B cell (primary cell): ENCODE measurements at regions of chr13 and their contacts with region 1.

Region 1: DNA sequence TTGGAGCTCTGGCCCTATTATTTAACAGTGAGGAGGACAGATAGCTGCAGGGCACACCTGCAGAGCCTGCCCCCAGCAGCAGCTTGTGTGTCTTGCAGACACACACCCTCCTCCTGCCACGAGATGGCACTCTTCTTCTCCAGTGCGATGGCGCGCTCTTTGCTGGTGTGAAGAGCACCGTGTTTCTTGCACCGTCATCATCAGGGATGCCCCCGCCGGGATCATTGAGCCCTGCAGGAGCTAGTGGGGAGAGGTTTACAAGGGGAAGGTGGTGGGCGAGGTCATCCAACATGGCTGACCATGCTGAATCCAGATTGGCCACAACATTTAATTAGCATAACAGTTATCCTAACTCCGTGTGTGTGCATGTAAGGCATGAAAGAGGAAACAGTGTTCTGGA is 105.6 kb downstream of the RAB20 start:
- DNase-seq: peak; percentile 82
- ATAC-seq: peak; percentile 93
- H3K4me3 ChIP-seq: peak overlapping the region in 3 of 5 experiments; percentile 20 to 37 (median 29)
- H3K4me3 Mint-ChIP-seq: peak overlapping the region; percentile 60
- H3K27ac ChIP-seq: no peak overlapping the region
- H3K27ac Mint-ChIP-seq: peak overlapping the region; percentile 8
- H3K4me1 ChIP-seq: peaks cover 9 to 10% of the 10 kb centered on the region in 2 donors
- H3K4me1 Mint-ChIP-seq: peaks cover 19% of the 10 kb centered on the region
- H3K27me3 ChIP-seq: no peaks in the 10 kb centered on the region
- H3K27me3 Mint-ChIP-seq: peaks cover 4% of the 10 kb centered on the region
- CTCF ChIP-seq: peak; percentile 84

Region 2: GRCh38 chr13:109998726-109999533 is 457.0 kb before region 1 on chr13:
- CTCF ChIA-PET with region 1: no interaction called
- POLR2A ChIA-PET with region 1: no interaction called
- intact Hi-C with region 1: no loop called
- DNase-seq: no peak
- ATAC-seq: no peak
- H3K4me3 ChIP-seq: no peak overlapping the region
- H3K4me3 Mint-ChIP-seq: no peak overlapping the region
- H3K27ac ChIP-seq: no peak overlapping the region
- H3K27ac Mint-ChIP-seq: no peak overlapping the region
- H3K4me1 ChIP-seq: no peaks in the 10 kb centered on the region
- H3K4me1 Mint-ChIP-seq: no peaks in the 10 kb centered on the region
- H3K27me3 ChIP-seq: no peaks in the 10 kb centered on the region
- H3K27me3 Mint-ChIP-seq: no peaks in the 10 kb centered on the region
- CTCF ChIP-seq: no peak

Region 3: GRCh38 chr13:110471833-110472162 is 15.9 kb after region 1 on chr13:
- CTCF ChIA-PET with region 1: interaction called, 26 read pairs
- POLR2A ChIA-PET with region 1: no interaction called
- intact Hi-C with region 1: no loop called
- DNase-seq: peak; percentile 89
- ATAC-seq: peak; percentile 94
- H3K4me3 ChIP-seq: peak overlapping the region in 2 of 5 experiments; percentile 17 to 19
- H3K4me3 Mint-ChIP-seq: peak overlapping the region; percentile 85
- H3K27ac ChIP-seq: peak overlapping the region; percentile 80 to 83
- H3K27ac Mint-ChIP-seq: peak overlapping the region; percentile 89
- H3K4me1 ChIP-seq: peaks cover 38 to 50% of the 10 kb centered on the region in 2 donors
- H3K4me1 Mint-ChIP-seq: peaks cover 49% of the 10 kb centered on the region
- H3K27me3 ChIP-seq: peaks cover 0 to 2% (median 0%) of the 10 kb centered on the region in 4 experiments
- H3K27me3 Mint-ChIP-seq: no peaks in the 10 kb centered on the region
- CTCF ChIP-seq: no peak

Region 4: DNA sequence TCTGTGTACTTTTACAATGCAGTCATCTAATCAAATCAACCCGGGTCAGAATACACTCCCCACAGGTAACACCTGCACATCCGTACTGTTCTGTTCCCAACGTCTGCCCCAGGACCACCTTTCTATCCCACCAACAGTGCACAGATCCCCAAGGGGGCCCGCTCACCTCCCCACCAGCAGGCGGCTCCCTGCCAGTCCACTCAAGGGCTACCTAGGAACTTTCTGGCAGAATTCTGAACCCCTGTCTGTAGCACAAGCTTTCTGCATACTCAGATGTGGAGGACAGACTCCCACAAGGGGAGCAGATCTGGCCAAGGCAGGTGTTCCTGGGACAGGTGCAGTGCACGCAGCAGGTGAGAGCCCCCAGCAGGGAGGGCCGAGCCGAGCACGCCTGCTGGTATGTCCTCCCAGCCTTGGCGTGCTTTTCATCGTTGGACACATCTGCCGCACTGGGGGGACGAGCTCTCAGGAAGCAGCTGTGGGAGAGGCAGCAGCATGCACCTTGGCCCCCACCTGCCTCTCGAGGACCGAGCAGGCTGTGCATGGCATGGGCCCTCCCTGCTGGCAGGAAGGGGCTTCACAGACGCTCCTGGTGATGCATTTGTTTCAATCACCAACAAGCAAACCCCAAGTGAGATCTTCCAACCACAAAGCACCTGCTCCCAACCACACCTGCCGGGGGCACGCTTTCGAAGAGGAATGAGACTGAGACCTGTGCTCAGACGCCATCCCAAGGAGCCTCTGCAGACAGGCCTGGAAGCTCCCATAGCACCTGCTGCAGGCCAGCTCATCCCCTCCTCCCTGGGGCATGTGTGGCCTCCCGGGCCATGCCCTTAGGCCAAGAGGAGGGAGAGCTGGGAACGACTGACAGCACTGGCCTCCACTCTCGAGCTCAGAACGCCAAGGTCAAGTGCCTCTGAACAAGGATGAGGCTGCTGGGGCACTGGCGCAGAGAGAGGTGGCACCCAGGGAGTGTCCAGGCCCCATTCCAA is 69.7 kb after region 1 on chr13:
- CTCF ChIA-PET with region 1: interaction called, 16 read pairs
- POLR2A ChIA-PET with region 1: no interaction called
- intact Hi-C with region 1: loop called (anchors 1 kb)
- DNase-seq: peak; percentile 53
- ATAC-seq: peak; percentile 72
- H3K4me3 ChIP-seq: no peak overlapping the region
- H3K4me3 Mint-ChIP-seq: peak overlapping the region; percentile 37
- H3K27ac ChIP-seq: no peak overlapping the region
- H3K27ac Mint-ChIP-seq: peak overlapping the region; percentile 37
- H3K4me1 ChIP-seq: peaks cover 20 to 21% of the 10 kb centered on the region in 2 donors
- H3K4me1 Mint-ChIP-seq: peaks cover 27% of the 10 kb centered on the region
- H3K27me3 ChIP-seq: peaks cover 0 to 5% (median 0%) of the 10 kb centered on the region in 4 experiments
- H3K27me3 Mint-ChIP-seq: no peaks in the 10 kb centered on the region
- CTCF ChIP-seq: no peak

Region 5: DNA sequence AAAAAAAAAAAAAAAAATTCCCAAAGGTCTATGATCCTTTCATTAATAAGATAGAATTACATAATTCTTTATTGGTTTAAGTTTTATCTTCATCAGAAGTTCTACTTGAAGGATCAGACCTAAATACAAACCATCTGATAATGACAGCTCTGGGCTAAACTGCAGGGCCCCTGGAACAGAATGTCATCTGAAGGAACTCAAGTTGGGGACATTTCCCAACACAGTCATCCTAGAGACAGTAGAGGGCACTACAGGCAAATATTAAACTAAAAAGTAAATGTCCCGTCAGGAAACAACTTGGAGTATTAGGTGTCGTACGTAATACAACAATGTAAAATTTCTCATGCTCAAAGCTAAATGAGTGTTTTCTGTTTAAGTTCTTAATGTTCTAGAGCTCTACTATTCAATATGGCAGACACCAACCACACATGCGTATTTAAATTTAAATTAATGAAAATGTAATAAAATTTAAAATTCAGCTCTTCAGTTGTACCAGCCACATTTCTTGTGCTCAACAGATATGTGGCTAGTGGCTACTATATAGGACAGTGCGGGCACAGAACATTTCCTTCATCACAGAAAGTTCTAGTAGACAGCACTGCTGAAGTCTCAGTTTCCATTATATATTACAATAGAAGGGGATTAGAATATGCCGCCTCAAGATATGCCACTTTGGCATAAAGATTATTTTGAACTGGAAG is 137.6 kb after region 1 on chr13:
- CTCF ChIA-PET with region 1: interaction called, 16 read pairs
- POLR2A ChIA-PET with region 1: no interaction called
- intact Hi-C with region 1: no loop called
- DNase-seq: peak; percentile 64
- ATAC-seq: peak; percentile 68
- H3K4me3 ChIP-seq: no peak overlapping the region
- H3K4me3 Mint-ChIP-seq: no peak overlapping the region
- H3K27ac ChIP-seq: no peak overlapping the region
- H3K27ac Mint-ChIP-seq: no peak overlapping the region
- H3K4me1 ChIP-seq: no peaks in the 10 kb centered on the region
- H3K4me1 Mint-ChIP-seq: peaks cover 4% of the 10 kb centered on the region
- H3K27me3 ChIP-seq: no peaks in the 10 kb centered on the region
- H3K27me3 Mint-ChIP-seq: no peaks in the 10 kb centered on the region
- CTCF ChIP-seq: peak; percentile 61

Region 6: GRCh38 chr13:110715395-110716235 is 259.7 kb after region 1 on chr13:
- CTCF ChIA-PET with region 1: interaction called, 3 read pairs
- POLR2A ChIA-PET with region 1: no interaction called
- intact Hi-C with region 1: loop called (anchors 5 kb)
- DNase-seq: peak; percentile 99
- ATAC-seq: peak; percentile 56
- H3K4me3 ChIP-seq: peak overlapping the region; percentile 89 to 100 (median 100)
- H3K4me3 Mint-ChIP-seq: peak overlapping the region; percentile 96
- H3K27ac ChIP-seq: peak overlapping the region; percentile 82 to 86
- H3K27ac Mint-ChIP-seq: peak overlapping the region; percentile 96
- H3K4me1 ChIP-seq: peaks cover 28 to 30% of the 10 kb centered on the region in 2 donors
- H3K4me1 Mint-ChIP-seq: peaks cover 35% of the 10 kb centered on the region
- H3K27me3 ChIP-seq: no peaks in the 10 kb centered on the region
- H3K27me3 Mint-ChIP-seq: no peaks in the 10 kb centered on the region
- CTCF ChIP-seq: peak; percentile 30